Naive thymus-derived CD8-positive, alpha-beta T cell (primary cell): ENCODE measurements at regions of chr5 and their contacts with region 1.

Region 1: DNA sequence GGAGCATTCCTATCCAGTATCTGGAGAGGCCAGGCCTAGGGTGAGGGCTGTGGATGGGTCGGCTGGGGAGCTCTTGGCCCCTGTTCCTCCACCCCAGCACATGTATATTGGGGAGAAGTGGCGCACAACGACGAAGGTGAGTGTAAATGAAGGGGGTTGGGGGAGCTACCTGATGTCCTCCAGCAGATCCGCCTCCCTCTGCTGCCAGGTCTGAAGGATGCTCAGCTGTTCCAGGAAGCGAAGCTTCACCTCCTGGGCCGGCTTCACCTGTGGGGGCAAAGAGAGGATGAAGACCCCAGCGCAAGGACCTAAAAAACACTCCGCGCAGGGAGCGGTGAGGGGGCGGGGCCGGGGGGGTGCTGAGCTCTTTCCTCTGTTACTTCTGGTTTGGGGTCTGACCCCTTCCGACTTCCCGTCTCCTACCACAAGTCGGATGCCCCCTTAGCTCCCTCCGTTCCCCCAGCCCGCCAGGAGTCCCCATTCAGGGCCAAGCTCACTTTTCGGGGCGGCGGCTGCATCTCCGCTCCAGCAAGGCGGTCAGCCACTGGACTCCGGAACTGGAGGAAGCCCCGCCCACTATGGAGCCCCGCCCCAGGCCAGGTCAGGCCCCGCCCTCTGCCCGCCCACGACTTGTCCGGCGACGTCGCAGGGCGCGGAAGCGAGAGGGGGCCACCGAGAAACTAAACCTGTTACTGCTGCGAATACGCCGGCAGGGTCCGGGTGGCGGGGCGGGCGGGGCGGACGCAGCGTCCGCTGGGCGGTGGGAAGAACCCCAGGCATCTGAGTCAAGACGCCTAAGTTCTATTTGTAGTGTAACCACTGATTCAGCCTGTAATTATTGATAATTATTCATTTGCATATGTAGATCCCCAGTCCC is at the start of gene FCHSD1:
- DNase-seq: peak; percentile 57 to 89 (median 80)
- ATAC-seq: peak; percentile 87 to 95
- H3K4me3 Mint-ChIP-seq: peak within 1 kb of the TSS; percentile 67 to 97 (median 92)
- H3K27ac Mint-ChIP-seq: peak within 1 kb of the TSS; percentile 79 to 98 (median 94)
- H3K4me1 Mint-ChIP-seq: peaks cover 37 to 56% (median 44%) of the 10 kb centered on the region in 4 donors
- H3K27me3 Mint-ChIP-seq: peaks cover 0 to 5% (median 0%) of the 10 kb centered on the region in 5 donors
- polyA plus RNA-seq, gene FCHSD1: 8.8 to 9.4 (median 9.3) TPM

Region 2: DNA sequence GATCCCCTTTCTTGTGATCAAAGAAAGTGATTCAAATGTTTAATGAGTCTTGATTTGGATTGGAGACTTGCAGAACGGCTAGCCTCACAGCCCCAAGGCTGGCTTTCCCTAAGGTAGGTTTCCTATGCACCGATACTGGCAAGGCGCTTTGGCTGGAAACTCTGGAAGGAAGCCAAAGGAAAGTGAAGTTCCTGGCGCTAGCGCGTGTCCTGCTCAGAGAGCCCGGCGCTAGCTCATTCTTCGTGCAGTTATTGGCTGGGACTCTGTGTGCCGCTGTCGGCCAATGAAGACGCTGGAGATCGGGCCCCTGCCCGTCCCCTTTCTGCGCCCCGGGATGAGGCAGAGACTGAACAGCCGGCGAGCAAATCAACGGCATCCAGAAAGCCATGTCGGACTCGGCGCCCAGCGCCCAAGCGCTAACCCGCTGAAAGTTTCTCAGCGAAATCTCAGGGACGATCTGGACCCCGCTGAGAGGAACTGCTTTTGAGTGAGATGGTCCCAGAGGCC is 175.4 kb before region 1 on chr5 and contains the start of gene PCDHGC3:
- POLR2A ChIA-PET with region 1: no interaction called
- DNase-seq: peak in 3 of 10 donors; percentile 18 to 22 (median 20)
- ATAC-seq: peak; percentile 74 to 92
- H3K4me3 Mint-ChIP-seq: peak within 1 kb of the TSS; percentile 83 to 93 (median 87)
- H3K27ac Mint-ChIP-seq: peak within 1 kb of the TSS in 3 of 10 donors; percentile 1 to 78 (median 9)
- H3K4me1 Mint-ChIP-seq: peaks cover 10 to 31% (median 28%) of the 10 kb centered on the region in 4 donors
- H3K27me3 Mint-ChIP-seq: peaks cover 32 to 64% (median 47%) of the 10 kb centered on the region in 5 donors
- polyA plus RNA-seq, gene PCDHGC3: 0.18 to 0.25 TPM in 2 of 3 donors, not detected in the other

Region 3: DNA sequence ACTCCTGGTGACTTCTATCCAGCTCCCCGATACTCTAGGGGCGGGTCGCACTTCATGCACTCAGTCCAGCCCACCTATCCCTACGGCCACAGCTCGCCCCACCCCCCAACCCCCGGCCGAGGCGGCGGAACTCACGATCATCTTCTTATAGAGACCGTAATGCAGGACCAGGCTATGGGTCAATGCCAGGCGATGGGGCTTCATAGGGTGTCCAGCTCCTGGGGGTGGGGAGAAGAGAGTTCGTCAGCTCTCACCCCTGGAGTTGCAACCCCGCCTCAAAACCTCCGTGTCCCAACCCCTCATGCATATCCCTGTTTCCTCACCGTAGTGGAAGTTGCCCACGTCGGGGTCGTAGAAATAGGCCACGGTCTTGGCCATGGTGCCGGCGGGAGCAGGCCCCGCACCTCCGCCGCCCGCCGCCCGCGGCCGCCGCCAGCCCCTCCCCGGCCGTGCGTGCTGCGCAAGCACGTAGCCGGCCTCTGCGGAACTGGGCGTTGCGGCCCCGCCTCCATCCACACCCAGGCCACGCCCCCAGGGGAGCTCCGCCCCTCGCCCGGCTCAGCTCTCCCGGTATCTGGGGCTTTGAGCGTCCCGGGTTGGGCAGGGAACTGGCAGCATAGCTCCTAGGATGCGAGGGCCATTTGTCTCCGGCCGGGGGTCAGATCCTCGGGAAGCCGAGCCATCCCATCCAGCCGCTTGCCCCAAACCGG is 14.5 kb before region 1 on chr5 and contains the starts of genes HDAC3 and RELL2:
- POLR2A ChIA-PET with region 1: interaction called, 107 read pairs
- DNase-seq: peak; percentile 86 to 97 (median 94)
- ATAC-seq: peak; percentile 73 to 83
- H3K4me3 Mint-ChIP-seq: peak within 1 kb of the TSS; percentile 85 to 97 (median 92)
- H3K27ac Mint-ChIP-seq: peak within 1 kb of the TSS; percentile 31 to 97 (median 92)
- H3K4me1 Mint-ChIP-seq: peaks cover 23 to 50% (median 39%) of the 10 kb centered on the region in 4 donors
- H3K27me3 Mint-ChIP-seq: no peaks in the 10 kb centered on the region
- polyA plus RNA-seq, gene HDAC3: 85.7 to 100 (median 91.7) TPM
- polyA plus RNA-seq, gene RELL2: 2.6 to 3.9 (median 3.4) TPM

Region 4: DNA sequence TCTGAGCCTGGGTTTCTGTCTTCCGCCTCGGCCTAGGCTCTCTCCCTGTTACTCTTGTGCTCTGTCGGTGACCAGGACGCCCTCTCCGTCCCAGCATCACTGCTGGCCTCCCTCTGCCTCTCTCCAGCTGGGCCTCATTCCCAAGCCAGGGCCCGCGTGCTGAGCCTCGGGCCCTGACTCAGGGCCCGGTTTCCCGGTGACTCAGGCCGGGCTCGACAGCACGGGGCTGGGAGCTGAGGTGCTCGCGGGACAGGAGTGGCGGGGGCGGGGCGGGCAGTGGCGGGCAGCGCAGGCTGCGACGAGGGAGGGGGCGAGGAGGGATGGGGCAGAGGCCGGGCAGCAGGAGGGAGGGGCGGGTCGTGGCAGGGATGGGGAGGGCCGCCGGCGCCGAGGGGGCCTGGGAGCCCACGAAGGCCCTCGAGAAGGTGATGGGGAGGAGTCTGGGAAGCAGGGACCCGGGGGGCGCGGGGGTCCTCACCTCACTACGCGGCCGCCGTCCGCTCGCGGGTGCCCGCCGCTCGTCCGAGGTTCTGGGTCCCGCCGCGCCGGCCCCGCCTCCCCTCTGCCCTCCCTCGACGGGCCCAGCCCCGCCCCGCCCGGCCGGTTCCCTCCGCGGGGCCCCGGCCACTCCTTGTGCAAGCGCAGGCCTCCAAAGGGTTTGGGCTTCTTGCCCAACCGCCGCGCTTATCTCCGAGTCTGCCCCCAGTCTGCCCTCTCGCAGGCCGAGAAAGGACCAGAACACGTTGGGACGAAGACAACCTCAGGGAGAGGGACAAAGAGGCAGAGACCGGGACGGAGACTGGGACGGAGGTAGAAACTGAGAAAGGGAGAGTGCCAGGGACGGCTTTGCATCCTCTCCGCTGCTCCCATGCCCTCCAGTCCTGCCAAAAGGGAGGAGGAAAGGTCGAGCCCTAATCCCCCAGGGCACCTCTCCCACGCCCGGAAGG is 30.9 kb after region 1 on chr5 and contains the start of gene ARAP3:
- POLR2A ChIA-PET with region 1: interaction called, 18 read pairs
- DNase-seq: peak in 5 of 10 donors; percentile 22 to 48 (median 41)
- ATAC-seq: peak; percentile 56 to 79
- H3K4me3 Mint-ChIP-seq: peak within 1 kb of the TSS; percentile 32 to 89 (median 83)
- H3K27ac Mint-ChIP-seq: peak within 1 kb of the TSS; percentile 42 to 95 (median 87)
- H3K4me1 Mint-ChIP-seq: peaks cover 18 to 44% (median 29%) of the 10 kb centered on the region in 4 donors
- H3K27me3 Mint-ChIP-seq: no peaks in the 10 kb centered on the region
- polyA plus RNA-seq, gene ARAP3: not detected